PC-9 (cell line): ENCODE measurements at regions of chr10 and their contacts with region 1.

Region 1: GRCh38 chr10:48656241-48656913 is 28.3 kb upstream of the WDFY4 start:
- DNase-seq: peak; percentile 67 to 97
- H3K4me3 ChIP-seq: peak overlapping the region; percentile 66
- H3K27ac ChIP-seq: no peak overlapping the region
- H3K4me1 ChIP-seq: peaks cover 12% of the 10 kb centered on the region; the same call in 1 of the 2 replicates
- H3K27me3 ChIP-seq: no peaks in the 10 kb centered on the region
- CTCF ChIP-seq: peak; percentile 90

Region 2: DNA sequence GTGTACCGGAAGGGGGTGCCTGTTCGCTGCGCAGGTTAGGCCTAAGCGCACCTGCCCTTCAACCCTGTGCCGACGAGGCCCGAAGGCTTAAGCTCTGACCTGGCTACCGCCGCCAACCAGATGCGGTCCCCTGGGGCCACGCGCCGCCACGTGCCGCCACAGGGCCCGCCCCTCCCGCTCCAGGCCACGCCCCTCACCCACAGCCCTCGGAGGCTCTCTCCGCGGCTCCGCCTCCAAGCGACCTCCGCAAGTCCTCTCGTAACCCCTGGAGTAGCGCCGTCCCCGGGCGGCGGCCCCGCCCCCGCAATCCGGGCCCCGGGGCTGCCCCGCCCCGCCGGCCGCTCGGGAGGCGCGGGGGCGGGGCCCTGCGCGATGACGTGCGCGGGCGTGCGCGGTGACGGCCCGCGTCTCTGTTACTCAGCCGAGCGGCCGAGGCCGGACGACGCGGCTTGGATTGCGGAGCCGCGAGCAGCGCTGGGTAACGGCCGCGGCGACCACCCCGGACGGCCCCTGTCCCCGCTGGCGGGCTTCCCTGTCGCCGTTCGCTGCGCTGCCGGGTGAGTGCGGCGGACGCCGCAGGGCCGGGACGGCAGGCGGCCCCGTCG is 350.0 kb before region 1 on chr10 and contains the start of gene MAPK8:
- CTCF ChIA-PET with region 1: interaction called, 7 read pairs
- POLR2A ChIA-PET with region 1: no interaction called
- intact Hi-C with region 1: loop called (anchors 2 kb)
- DNase-seq: peak; percentile 77 to 96
- H3K4me3 ChIP-seq: peak within 1 kb of the TSS; percentile 85
- H3K27ac ChIP-seq: peak within 1 kb of the TSS; percentile 14; the same call in 1 of the 2 replicates
- H3K4me1 ChIP-seq: peaks cover 45% of the 10 kb centered on the region
- H3K27me3 ChIP-seq: no peaks in the 10 kb centered on the region
- CTCF ChIP-seq: no peak
- total RNA-seq, gene MAPK8: 67.5 and 72.1 TPM in 2 replicates

Region 3: GRCh38 chr10:48363617-48364355 is 292.6 kb before region 1 on chr10:
- CTCF ChIA-PET with region 1: interaction called, 4 read pairs
- POLR2A ChIA-PET with region 1: no interaction called
- intact Hi-C with region 1: loop called (anchors 1 kb)
- DNase-seq: peak; percentile 28 to 42
- H3K4me3 ChIP-seq: no peak overlapping the region
- H3K27ac ChIP-seq: no peak overlapping the region
- H3K4me1 ChIP-seq: peaks cover 7% of the 10 kb centered on the region; the same call in 1 of the 2 replicates
- H3K27me3 ChIP-seq: no peaks in the 10 kb centered on the region
- CTCF ChIP-seq: peak; percentile 83

Region 4: GRCh38 chr10:48551861-48552591 is 104.4 kb before region 1 on chr10:
- CTCF ChIA-PET with region 1: interaction called, 14 read pairs
- POLR2A ChIA-PET with region 1: no interaction called
- intact Hi-C with region 1: loop called (anchors 1 kb)
- DNase-seq: peak in 1 of 2 experiments; percentile 47
- H3K4me3 ChIP-seq: no peak overlapping the region
- H3K27ac ChIP-seq: no peak overlapping the region
- H3K4me1 ChIP-seq: no peaks in the 10 kb centered on the region
- H3K27me3 ChIP-seq: no peaks in the 10 kb centered on the region
- CTCF ChIP-seq: peak; percentile 89

Region 5: GRCh38 chr10:49407552-49408137 is 751.3 kb after region 1 on chr10:
- CTCF ChIA-PET with region 1: interaction called, 3 read pairs
- POLR2A ChIA-PET with region 1: no interaction called
- intact Hi-C with region 1: loop called (anchors 2 kb)
- DNase-seq: peak; percentile 66 to 84
- H3K4me3 ChIP-seq: no peak overlapping the region
- H3K27ac ChIP-seq: no peak overlapping the region
- H3K4me1 ChIP-seq: no peaks in the 10 kb centered on the region
- H3K27me3 ChIP-seq: peaks cover 10% of the 10 kb centered on the region
- CTCF ChIP-seq: peak; percentile 97

Region 6: GRCh38 chr10:49592726-49593563 is 936.6 kb after region 1 on chr10:
- CTCF ChIA-PET with region 1: no interaction called
- POLR2A ChIA-PET with region 1: no interaction called
- intact Hi-C with region 1: loop called (anchors 5 kb)
- DNase-seq: peak; percentile 43 to 65
- H3K4me3 ChIP-seq: no peak overlapping the region
- H3K27ac ChIP-seq: no peak overlapping the region
- H3K4me1 ChIP-seq: no peaks in the 10 kb centered on the region
- H3K27me3 ChIP-seq: no peaks in the 10 kb centered on the region
- CTCF ChIP-seq: peak; percentile 95